ENCODE measurements at regions of chr5 and their contacts with region 1.

Region 1: GRCh38 chr5:95646554-95647431 is at the start of gene RFESD:
- DNase-seq: peak; percentile 98
- H3K4me3 ChIP-seq: peak within 1 kb of the TSS; percentile 78
- H3K27ac ChIP-seq: peak within 1 kb of the TSS; percentile 75
- H3K4me1 ChIP-seq: peaks cover 33% of the 10 kb centered on the region
- CTCF ChIP-seq: 0 out of 2 replicates have a peak, but pooled peaks have one; percentile 33
- total RNA-seq, gene RFESD: 7.6 and 9.9 TPM in 2 replicates

Region 2: DNA sequence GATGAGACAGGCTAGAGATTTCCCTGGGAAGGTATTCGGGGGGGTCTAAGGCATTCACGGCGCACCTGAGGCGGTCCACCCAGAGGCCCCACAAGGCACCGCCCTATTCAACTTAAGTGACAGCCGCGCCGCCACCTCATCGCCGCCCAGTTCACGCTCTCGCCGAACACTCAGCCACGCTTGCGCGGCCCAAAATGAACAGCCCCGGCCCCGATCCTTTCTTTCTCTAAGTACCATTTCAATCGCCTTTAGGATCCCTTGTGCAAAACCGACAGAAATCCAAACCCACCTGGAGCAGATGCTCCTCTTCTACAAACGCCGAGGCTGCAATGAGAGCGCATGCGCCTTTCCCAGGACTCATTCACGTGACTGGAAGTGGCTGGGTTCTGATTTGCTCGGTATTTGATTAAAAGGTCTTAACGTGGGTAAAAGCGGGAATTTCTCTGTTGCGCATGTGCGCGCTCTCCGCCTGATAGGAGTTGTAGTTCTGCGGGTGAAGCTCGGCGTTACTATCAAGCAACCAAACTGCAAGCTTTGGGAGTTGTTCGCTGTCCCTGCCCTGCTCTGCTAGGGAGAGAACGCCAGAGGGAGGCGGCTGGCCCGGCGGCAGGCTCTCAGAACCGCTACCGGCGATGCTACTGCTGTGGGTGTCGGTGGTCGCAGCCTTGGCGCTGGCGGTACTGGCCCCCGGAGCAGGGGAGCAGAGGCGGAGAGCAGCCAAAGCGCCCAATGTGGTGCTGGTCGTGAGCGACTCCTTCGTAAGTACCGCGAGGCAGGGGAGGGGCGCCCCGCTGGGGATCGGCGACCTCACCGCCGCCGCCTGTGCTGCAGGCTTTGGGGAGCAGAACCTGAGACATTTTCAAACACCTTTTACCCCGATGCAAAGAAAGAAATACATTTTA is 91.9 kb before region 1 on chr5 and contains the starts of genes ARSK and SKIC3:
- CTCF ChIA-PET with region 1: no interaction called
- POLR2A ChIA-PET with region 1: no interaction called
- intact Hi-C with region 1: loop called (anchors 1 kb)
- DNase-seq: peak; percentile 99
- H3K4me3 ChIP-seq: peak within 1 kb of the TSS; percentile 81
- H3K27ac ChIP-seq: peak within 1 kb of the TSS; percentile 71
- H3K4me1 ChIP-seq: peaks cover 15% of the 10 kb centered on the region
- CTCF ChIP-seq: 0 out of 2 replicates have a peak, but pooled peaks have one; percentile 30
- total RNA-seq, gene ARSK: 4.1 and 5.9 TPM in 2 replicates
- total RNA-seq, gene SKIC3: 53.0 and 55.4 TPM in 2 replicates

Region 3: GRCh38 chr5:95781101-95781583 is 134.3 kb after region 1 on chr5:
- CTCF ChIA-PET with region 1: interaction called, 3 read pairs
- POLR2A ChIA-PET with region 1: no interaction called
- intact Hi-C with region 1: loop called (anchors 1 kb)
- DNase-seq: peak; percentile 88
- H3K4me3 ChIP-seq: no peak overlapping the region
- H3K27ac ChIP-seq: no peak overlapping the region
- H3K4me1 ChIP-seq: no peaks in the 10 kb centered on the region
- CTCF ChIP-seq: peak; percentile 100

Region 4: GRCh38 chr5:95835682-95836385 is 189.0 kb after region 1 on chr5:
- CTCF ChIA-PET with region 1: no interaction called
- POLR2A ChIA-PET with region 1: interaction called, 13 read pairs
- intact Hi-C with region 1: no loop called
- DNase-seq: no peak
- H3K4me3 ChIP-seq: peak overlapping the region; percentile 66
- H3K27ac ChIP-seq: no peak overlapping the region
- H3K4me1 ChIP-seq: peaks cover 37% of the 10 kb centered on the region
- CTCF ChIP-seq: no peak

Region 5: GRCh38 chr5:96662725-96663513 is 1016.1 kb after region 1 on chr5:
- CTCF ChIA-PET with region 1: no interaction called
- POLR2A ChIA-PET with region 1: no interaction called
- intact Hi-C with region 1: loop called (anchors 5 kb)
- DNase-seq: peak; percentile 89
- H3K4me3 ChIP-seq: peak overlapping the region; percentile 80
- H3K27ac ChIP-seq: peak overlapping the region; percentile 88
- H3K4me1 ChIP-seq: peaks cover 23% of the 10 kb centered on the region
- CTCF ChIP-seq: no peak